Calu3 (cell line): ENCODE measurements at regions of chr1 and their contacts with region 1.

Region 1: DNA sequence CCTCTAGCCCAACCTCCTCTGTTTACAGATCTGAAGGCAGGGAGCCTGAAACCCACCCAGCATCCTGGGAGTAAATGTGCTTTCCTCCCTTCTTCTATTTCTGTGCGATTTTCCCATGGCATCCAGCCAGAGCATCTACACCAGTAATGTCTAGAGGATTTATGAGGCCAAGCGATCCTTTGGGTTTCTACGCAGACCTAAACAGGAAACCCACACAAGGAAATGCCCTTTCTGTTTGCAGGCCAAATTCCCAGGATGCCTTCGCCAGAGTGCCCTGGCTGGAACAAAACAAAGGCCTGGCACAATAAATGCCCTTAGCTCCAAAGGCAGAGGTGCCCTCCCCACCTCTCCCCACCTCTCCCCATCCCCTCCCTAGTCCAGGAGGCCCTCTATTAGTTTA is 110.5 kb upstream of the CDC42BPA start:
- DNase-seq: peak; percentile 83
- H3K4me3 Mint-ChIP-seq: peak overlapping the region; percentile 2
- H3K27ac Mint-ChIP-seq: peak overlapping the region; percentile 56
- H3K4me1 Mint-ChIP-seq: peaks cover 57% of the 10 kb centered on the region
- H3K27me3 Mint-ChIP-seq: no peaks in the 10 kb centered on the region
- CTCF ChIP-seq: no peak

Region 2: DNA sequence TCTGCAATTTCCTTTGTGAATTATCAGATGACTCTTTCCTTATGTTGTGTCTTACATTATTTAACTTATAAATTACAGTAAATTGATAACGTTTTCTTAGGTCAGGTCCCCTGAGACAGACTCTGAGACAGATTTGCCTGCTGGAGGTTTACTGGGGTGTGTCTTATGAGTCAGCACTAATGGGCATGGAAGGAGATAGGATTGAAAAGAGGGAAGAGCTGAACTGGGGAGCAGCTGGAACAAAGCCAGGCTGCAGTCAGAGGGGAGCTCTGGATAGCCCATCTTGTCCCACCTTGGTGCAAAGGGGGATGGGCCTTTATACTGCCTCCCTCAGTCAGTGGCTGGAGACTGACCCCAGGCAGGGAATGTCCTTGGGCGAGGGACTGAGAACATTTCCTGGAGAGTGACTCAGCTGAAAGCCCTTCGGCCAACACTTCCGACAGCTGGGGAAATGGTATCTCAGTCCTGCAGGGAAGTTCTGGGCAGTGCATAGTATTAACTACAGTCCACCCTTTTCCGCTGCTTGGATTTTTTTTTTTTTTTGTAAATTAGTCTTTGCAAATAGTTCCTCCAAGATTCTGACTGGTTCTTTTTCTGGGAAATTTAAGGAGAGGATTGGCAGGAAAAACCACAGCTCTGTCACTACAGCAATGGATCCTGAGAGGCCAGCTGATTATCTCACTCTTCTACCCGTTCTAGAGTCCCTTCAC is 71.5 kb before region 1 on chr1:
- CTCF ChIA-PET with region 1: interaction called, 4 read pairs
- intact Hi-C with region 1: loop called (anchors 5 kb)
- DNase-seq: peak; percentile 75
- H3K4me3 Mint-ChIP-seq: no peak overlapping the region
- H3K27ac Mint-ChIP-seq: peak overlapping the region; percentile 81
- H3K4me1 Mint-ChIP-seq: peaks cover 20% of the 10 kb centered on the region
- H3K27me3 Mint-ChIP-seq: no peaks in the 10 kb centered on the region
- CTCF ChIP-seq: no peak

Region 3: GRCh38 chr1:227399152-227399730 is 29.6 kb before region 1 on chr1:
- CTCF ChIA-PET with region 1: interaction called, 6 read pairs
- intact Hi-C with region 1: loop called (anchors 2 kb)
- DNase-seq: no peak
- H3K4me3 Mint-ChIP-seq: no peak overlapping the region
- H3K27ac Mint-ChIP-seq: no peak overlapping the region
- H3K4me1 Mint-ChIP-seq: peaks cover 24% of the 10 kb centered on the region
- H3K27me3 Mint-ChIP-seq: no peaks in the 10 kb centered on the region
- CTCF ChIP-seq: no peak